Thyroid gland (tissue), 4 donors: ENCODE measurements at regions of chr19 and their contacts with region 1.

Region 1: GRCh38 chr19:20612711-20613316 is 47.2 kb upstream of the ZNF737 start:
- DNase-seq: peak; percentile 21 to 31
- H3K4me3 ChIP-seq: peak overlapping the region in 2 of 3 donors; percentile 11 to 13
- H3K27ac ChIP-seq: peak overlapping the region; percentile 72 to 79 (median 78)
- H3K4me1 ChIP-seq: peaks cover 32 to 35% of the 10 kb centered on the region in 2 donors
- H3K27me3 ChIP-seq: no peaks in the 10 kb centered on the region
- CTCF ChIP-seq: no peak
- POLR2A ChIP-seq: no peak

Region 2: GRCh38 chr19:20558011-20558410 is 54.8 kb before region 1 on chr19:
- intact Hi-C with region 1: loop called (anchors 10 kb)
- DNase-seq: peak; percentile 75 to 82
- H3K4me3 ChIP-seq: no peak overlapping the region
- H3K27ac ChIP-seq: no peak overlapping the region
- H3K4me1 ChIP-seq: peaks cover 27 to 31% of the 10 kb centered on the region in 2 donors
- H3K27me3 ChIP-seq: no peaks in the 10 kb centered on the region
- CTCF ChIP-seq: peak in 5 of 6 experiments; percentile 37 to 66 (median 56)
- POLR2A ChIP-seq: no peak